PC-9 (cell line): ENCODE measurements at regions of chr2 and their contacts with region 1.

Region 1: GRCh38 chr2:152611458-152612231 is 105.6 kb downstream of the PRPF40A start:
- DNase-seq: peak in 1 of 2 experiments; percentile 34
- H3K4me3 ChIP-seq: no peak overlapping the region
- H3K27ac ChIP-seq: no peak overlapping the region; the same call in 1 of the 2 replicates
- H3K4me1 ChIP-seq: peaks cover 20% of the 10 kb centered on the region; the same call in 1 of the 2 replicates
- H3K27me3 ChIP-seq: no peaks in the 10 kb centered on the region
- CTCF ChIP-seq: no peak

Region 2: GRCh38 chr2:152335010-152335725 is 276.5 kb before region 1 on chr2 and contains the start of gene FMNL2:
- CTCF ChIA-PET with region 1: no interaction called
- POLR2A ChIA-PET with region 1: no interaction called
- intact Hi-C with region 1: no loop called
- DNase-seq: peak; percentile 69 to 88
- H3K4me3 ChIP-seq: peak within 1 kb of the TSS; percentile 94
- H3K27ac ChIP-seq: peak within 1 kb of the TSS; percentile 35
- H3K4me1 ChIP-seq: peaks cover 29% of the 10 kb centered on the region
- H3K27me3 ChIP-seq: no peaks in the 10 kb centered on the region
- CTCF ChIP-seq: no peak; the same call in 1 of the 2 replicates
- total RNA-seq, gene FMNL2: 29.0 and 33.6 TPM in 2 replicates

Region 3: GRCh38 chr2:152518641-152519580 is 92.7 kb before region 1 on chr2:
- CTCF ChIA-PET with region 1: no interaction called
- POLR2A ChIA-PET with region 1: no interaction called
- intact Hi-C with region 1: no loop called
- DNase-seq: no peak
- H3K4me3 ChIP-seq: no peak overlapping the region
- H3K27ac ChIP-seq: no peak overlapping the region
- H3K4me1 ChIP-seq: peaks cover 10% of the 10 kb centered on the region; the same call in 1 of the 2 replicates
- H3K27me3 ChIP-seq: no peaks in the 10 kb centered on the region
- CTCF ChIP-seq: no peak

Region 4: DNA sequence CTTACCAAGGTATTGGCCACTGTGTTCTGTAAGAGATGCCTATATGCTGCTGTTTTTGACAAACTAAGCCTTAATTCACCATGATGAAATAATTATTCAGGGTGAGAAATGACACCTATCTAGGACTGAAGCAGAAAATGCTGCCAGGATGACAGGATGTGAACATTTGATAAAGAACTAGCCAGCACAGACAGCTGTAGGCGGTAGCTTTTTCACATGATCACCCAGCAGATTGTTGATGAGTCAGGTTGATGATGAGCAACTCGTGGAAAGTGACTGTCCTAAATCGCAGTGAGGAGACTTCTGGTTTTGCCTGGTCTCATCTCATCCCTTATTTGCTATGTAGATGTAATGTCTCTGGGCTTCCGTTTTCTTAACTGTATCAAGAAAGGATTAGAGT is 38.5 kb before region 1 on chr2:
- CTCF ChIA-PET with region 1: no interaction called
- POLR2A ChIA-PET with region 1: interaction called, 10 read pairs
- intact Hi-C with region 1: no loop called
- DNase-seq: no peak
- H3K4me3 ChIP-seq: no peak overlapping the region
- H3K27ac ChIP-seq: no peak overlapping the region
- H3K4me1 ChIP-seq: no peaks in the 10 kb centered on the region
- H3K27me3 ChIP-seq: no peaks in the 10 kb centered on the region
- CTCF ChIP-seq: no peak